ENCODE measurements at regions of chr14 and their contacts with region 1.

Region 1: DNA sequence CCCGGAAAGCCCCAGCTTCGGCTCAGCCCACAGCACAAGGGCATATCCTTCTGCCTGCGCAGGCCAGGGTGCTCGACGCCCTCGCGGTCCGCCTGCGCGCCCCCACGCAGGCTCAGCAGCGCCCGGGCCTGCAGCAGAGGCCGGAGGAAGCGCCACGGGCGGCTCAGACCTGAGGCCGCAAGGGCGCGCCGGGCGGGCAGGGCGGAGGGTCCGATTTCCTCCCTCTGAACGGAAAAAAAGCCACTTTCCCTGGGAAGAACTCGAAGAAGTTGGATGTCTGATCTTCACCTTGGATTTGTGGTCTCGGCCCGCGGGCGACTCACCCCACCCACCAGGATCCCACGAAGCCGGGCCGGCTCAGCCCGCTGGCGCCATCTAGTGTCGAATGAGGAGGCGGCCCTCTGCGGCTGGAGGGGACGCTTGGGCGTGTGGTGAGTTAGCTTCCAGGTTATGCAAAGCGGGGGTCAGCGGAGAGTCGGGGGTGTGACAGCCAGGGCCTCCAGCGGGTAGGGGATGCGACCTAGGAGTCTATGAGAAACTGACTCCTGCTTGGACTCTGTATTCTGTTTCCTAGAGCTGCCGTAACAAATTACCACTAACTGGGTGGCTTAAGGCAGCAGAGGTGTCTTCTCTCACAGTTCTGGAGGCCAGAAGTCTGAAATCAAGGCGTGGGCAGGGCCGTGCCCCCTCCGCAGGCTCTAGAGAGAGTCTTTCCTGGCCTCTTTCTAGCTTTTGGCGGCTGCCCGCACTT is 40.0 kb upstream of the SRSF5 start:
- DNase-seq: peak; percentile 84 to 92
- H3K4me3 ChIP-seq: peak overlapping the region; percentile 37 to 51 (median 44)
- H3K27ac ChIP-seq: peak overlapping the region; percentile 39 to 78 (median 70)
- H3K4me1 ChIP-seq: peaks cover 0 to 25% (median 10%) of the 10 kb centered on the region in 4 donors
- H3K27me3 ChIP-seq: no peaks in the 10 kb centered on the region
- CTCF ChIP-seq: peak in 6 of 7 experiments; percentile 34 to 98 (median 95)
- EP300 ChIP-seq: no peak
- POLR2A ChIP-seq: no peak

Region 2: DNA sequence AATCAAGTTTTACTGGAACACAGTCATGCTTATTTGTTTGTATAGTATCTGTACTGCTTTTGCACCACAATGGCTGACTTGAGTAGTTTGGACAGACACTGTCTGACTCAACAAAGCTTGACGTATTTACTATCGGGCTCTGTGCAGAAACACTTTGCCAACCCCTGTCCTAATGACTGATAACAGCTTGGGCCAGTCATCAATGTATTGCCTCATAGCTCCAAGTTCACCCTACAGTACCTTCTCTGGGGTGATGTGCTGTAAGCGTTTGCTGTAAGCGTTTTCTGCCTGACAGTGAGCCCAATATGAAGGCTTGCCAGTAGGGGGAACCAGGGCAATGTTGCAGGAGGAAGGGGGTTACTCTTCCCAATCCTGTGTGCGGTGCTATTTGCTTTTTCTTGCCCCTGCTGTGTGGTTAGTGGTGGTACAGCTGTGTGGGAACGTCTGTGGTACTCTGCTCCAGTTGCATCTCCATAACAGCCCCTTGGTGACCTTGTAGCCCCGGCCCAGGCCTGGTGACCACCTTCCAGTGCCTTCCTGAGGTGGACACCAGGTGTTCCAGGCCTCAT is 146.8 kb before region 1 on chr14:
- intact Hi-C with region 1: loop called (anchors 5 kb)
- DNase-seq: peak; percentile 30 to 71
- H3K4me3 ChIP-seq: no peak overlapping the region
- H3K27ac ChIP-seq: no peak overlapping the region
- H3K4me1 ChIP-seq: peaks cover 0 to 11% (median 0%) of the 10 kb centered on the region in 4 donors
- H3K27me3 ChIP-seq: peaks cover 0 to 36% (median 13%) of the 10 kb centered on the region in 3 donors
- CTCF ChIP-seq: peak in 2 of 7 experiments; percentile 17 to 30
- EP300 ChIP-seq: no peak
- POLR2A ChIP-seq: no peak

Region 3: GRCh38 chr14:69600304-69600891 is 126.5 kb before region 1 on chr14:
- intact Hi-C with region 1: loop called (anchors 5 kb)
- DNase-seq: no peak
- H3K4me3 ChIP-seq: no peak overlapping the region
- H3K27ac ChIP-seq: no peak overlapping the region
- H3K4me1 ChIP-seq: no peaks in the 10 kb centered on the region
- H3K27me3 ChIP-seq: no peaks in the 10 kb centered on the region
- CTCF ChIP-seq: no peak
- EP300 ChIP-seq: no peak
- POLR2A ChIP-seq: no peak